Activated CD8-positive, alpha-beta T cell treated with anti-CD3 and anti-CD28 coated beads, Interleukin-2, amount 10 ng/mL, durations not matched to agents 7 days and 5 days (primary cell): ENCODE measurements at regions of chr3 and their contacts with region 1.

Region 1: DNA sequence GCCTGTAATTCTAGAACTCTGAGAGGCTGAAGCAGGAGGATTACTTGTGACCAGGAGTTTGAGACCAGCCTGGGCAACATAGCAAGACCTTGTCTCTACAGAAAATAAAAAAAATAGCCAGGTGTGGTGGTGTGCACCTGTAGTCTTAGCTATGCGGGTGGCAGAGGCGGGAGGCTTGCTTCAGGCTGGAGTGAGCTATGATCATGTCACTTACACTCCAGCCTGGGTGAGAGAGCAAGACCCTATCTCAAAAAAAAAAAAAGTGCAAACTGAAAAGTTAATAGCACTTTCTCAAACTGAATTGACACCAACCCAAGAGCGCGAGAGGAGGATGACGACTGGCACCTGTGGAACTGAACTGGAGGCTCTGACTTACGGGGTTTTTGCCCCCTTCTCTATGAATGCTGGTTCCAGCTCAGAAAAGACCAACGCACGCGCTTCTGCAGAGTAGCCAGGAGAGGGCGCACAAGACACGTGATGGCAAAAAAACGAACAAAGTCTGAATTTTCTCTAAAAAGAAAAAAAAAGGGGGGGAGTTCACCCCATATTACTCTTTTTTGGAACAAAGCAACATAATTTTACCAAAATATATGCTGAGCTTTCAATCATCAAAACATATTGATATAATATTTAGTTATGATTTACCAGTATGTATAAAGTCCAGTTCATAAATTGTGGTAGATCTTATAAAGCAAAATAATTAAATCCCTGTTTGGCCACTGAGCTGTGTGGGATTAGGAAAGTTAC is 23.7 kb downstream of the CFAP92 start:
- DNase-seq: peak; percentile 79
- ATAC-seq: peak; percentile 73
- H3K4me3 Mint-ChIP-seq: no peak overlapping the region
- H3K27ac Mint-ChIP-seq: no peak overlapping the region
- H3K4me1 Mint-ChIP-seq: peaks cover 14% of the 10 kb centered on the region
- H3K27me3 Mint-ChIP-seq: peaks cover 3% of the 10 kb centered on the region

Region 2: DNA sequence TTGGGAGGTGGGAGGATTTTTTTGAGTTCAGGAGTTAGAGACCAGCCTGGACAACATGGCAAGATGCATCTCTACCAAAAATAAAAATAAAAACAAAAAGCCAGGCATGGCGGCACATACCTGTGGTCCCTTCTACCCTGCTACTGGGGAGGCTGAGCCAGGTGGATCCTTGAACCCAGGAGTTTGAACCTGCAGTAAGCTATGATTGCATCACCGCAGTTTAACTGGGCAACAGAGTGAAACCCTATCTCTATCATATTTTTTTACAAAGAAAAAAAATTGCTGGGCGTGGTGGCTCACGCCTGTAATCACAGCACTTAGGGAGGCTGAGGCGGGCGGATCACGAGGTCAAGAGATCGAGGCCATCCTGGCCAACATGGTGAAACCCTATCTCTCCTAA is 283.7 kb before region 1 on chr3:
- CTCF ChIA-PET with region 1: no interaction called
- POLR2A ChIA-PET with region 1: no interaction called
- DNase-seq: no peak
- ATAC-seq: no peak
- H3K4me3 Mint-ChIP-seq: no peak overlapping the region
- H3K27ac Mint-ChIP-seq: no peak overlapping the region
- H3K4me1 Mint-ChIP-seq: peaks cover 20% of the 10 kb centered on the region
- H3K27me3 Mint-ChIP-seq: no peaks in the 10 kb centered on the region

Region 3: DNA sequence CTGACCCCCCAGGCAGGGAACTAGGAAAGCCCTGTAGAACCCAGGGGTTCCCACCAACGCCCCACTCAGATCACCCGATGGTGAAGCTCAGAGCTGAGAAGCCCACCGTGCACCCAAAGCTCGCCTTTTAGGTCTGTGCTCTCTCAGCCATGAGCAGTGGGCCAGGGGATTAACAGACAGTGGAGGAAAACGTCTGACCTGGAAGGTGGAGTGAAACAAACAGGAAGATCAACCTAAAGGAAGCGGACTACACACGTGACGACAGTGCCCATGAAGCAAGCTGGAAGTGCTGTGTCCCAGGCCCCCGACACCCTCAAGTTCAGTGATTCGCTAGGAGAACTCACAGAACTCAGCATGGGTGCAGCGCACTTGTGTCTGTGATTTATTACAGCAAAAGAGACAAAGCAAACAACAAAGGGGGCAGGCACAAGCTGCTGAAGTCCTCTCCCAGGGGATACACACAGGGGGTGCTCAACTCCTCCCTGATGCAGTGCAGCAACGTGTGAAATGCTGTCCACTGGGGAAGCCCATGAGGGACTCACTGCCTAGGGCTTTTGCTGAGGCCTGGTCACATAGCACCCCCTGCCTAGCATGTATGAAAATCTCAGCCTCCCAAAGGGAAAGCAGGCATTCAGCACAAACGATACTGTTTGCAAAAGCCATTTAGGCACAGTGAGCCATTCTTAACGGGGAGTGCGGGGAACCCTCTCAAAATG is 19.8 kb before region 1 on chr3:
- CTCF ChIA-PET with region 1: interaction called, 19 read pairs
- POLR2A ChIA-PET with region 1: no interaction called
- DNase-seq: peak; percentile 37
- ATAC-seq: no peak
- H3K4me3 Mint-ChIP-seq: no peak overlapping the region
- H3K27ac Mint-ChIP-seq: no peak overlapping the region
- H3K4me1 Mint-ChIP-seq: no peaks in the 10 kb centered on the region
- H3K27me3 Mint-ChIP-seq: peaks cover 3% of the 10 kb centered on the region

Region 4: GRCh38 chr3:129003578-129004160 is 33.5 kb after region 1 on chr3:
- CTCF ChIA-PET with region 1: interaction called, 25 read pairs
- POLR2A ChIA-PET with region 1: no interaction called
- DNase-seq: peak; percentile 58
- ATAC-seq: peak; percentile 79
- H3K4me3 Mint-ChIP-seq: peak overlapping the region; percentile 10
- H3K27ac Mint-ChIP-seq: no peak overlapping the region
- H3K4me1 Mint-ChIP-seq: peaks cover 50% of the 10 kb centered on the region
- H3K27me3 Mint-ChIP-seq: peaks cover 39% of the 10 kb centered on the region

Region 5: GRCh38 chr3:129035360-129036221 is 65.4 kb after region 1 on chr3:
- CTCF ChIA-PET with region 1: interaction called, 13 read pairs
- POLR2A ChIA-PET with region 1: no interaction called
- DNase-seq: peak; percentile 33
- ATAC-seq: peak; percentile 59
- H3K4me3 Mint-ChIP-seq: no peak overlapping the region
- H3K27ac Mint-ChIP-seq: peak overlapping the region; percentile 70
- H3K4me1 Mint-ChIP-seq: peaks cover 25% of the 10 kb centered on the region
- H3K27me3 Mint-ChIP-seq: peaks cover 4% of the 10 kb centered on the region

Region 6: DNA sequence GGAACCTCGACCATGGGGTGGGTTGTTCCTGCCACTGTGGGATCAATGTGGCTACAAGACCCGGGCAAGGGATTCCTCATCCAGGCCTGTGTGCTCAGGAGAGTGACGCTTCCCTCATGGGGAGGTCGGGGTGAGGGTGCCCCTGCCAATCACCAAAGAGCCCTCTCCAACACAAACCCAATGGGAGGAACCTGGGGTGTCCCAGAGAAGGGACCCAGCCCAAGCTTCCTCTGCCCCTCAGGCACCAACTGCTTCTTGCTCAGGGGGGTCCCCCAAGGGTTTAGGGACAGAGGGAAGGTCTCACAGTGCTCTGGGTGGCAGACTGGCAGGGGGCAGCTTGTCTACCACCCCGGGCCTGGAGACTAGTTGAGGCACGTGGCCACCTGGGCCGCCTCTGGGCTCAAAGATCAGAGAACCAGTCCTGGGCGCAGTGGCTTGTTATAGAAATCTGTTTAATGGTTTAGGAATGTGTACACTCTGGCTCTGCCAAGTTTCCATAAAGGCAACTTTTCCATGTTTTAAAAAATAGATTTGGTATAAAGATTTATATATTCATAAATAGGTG is 117.1 kb after region 1 on chr3:
- CTCF ChIA-PET with region 1: interaction called, 18 read pairs
- POLR2A ChIA-PET with region 1: no interaction called
- DNase-seq: no peak
- ATAC-seq: no peak
- H3K4me3 Mint-ChIP-seq: no peak overlapping the region
- H3K27ac Mint-ChIP-seq: no peak overlapping the region
- H3K4me1 Mint-ChIP-seq: peaks cover 4% of the 10 kb centered on the region
- H3K27me3 Mint-ChIP-seq: no peaks in the 10 kb centered on the region

Region 7: GRCh38 chr3:129160891-129161859 is 191.0 kb after region 1 on chr3 and contains the start of gene ISY1:
- CTCF ChIA-PET with region 1: interaction called, 41 read pairs
- POLR2A ChIA-PET with region 1: interaction called, 4 read pairs
- DNase-seq: peak; percentile 93
- ATAC-seq: peak; percentile 84
- H3K4me3 Mint-ChIP-seq: peak within 1 kb of the TSS; percentile 91
- H3K27ac Mint-ChIP-seq: peak within 1 kb of the TSS; percentile 99
- H3K4me1 Mint-ChIP-seq: peaks cover 36% of the 10 kb centered on the region
- H3K27me3 Mint-ChIP-seq: no peaks in the 10 kb centered on the region
- total RNA-seq, gene ISY1: 57.9 to 65.7 TPM

Region 8: GRCh38 chr3:129249276-129250065 is 279.3 kb after region 1 on chr3 and contains the start of gene COPG1:
- CTCF ChIA-PET with region 1: interaction called, 90 read pairs
- POLR2A ChIA-PET with region 1: interaction called, 4 read pairs
- DNase-seq: peak; percentile 90
- ATAC-seq: peak; percentile 87
- H3K4me3 Mint-ChIP-seq: peak within 1 kb of the TSS; percentile 88
- H3K27ac Mint-ChIP-seq: peak within 1 kb of the TSS; percentile 94
- H3K4me1 Mint-ChIP-seq: peaks cover 43% of the 10 kb centered on the region
- H3K27me3 Mint-ChIP-seq: no peaks in the 10 kb centered on the region
- total RNA-seq, gene COPG1: 135 to 140 TPM